ENCODE measurements at regions of chr17 and their contacts with region 1.

Region 1: GRCh38 chr17:17681187-17681848 is at the start of gene RAI1:
- DNase-seq: peak; percentile 86 to 88 (median 87)
- ATAC-seq: peak; percentile 27 to 73 (median 66)
- H3K4me3 ChIP-seq: peak within 1 kb of the TSS; percentile 68 to 96 (median 81)
- H3K27ac ChIP-seq: peak within 1 kb of the TSS; percentile 90 to 97 (median 96)
- H3K4me1 ChIP-seq: peaks cover 15 to 46% (median 32%) of the 10 kb centered on the region in 12 donors
- H3K27me3 ChIP-seq: no peaks in the 10 kb centered on the region
- CTCF ChIP-seq: peak; percentile 29 to 98 (median 82)
- POLR2A ChIP-seq: no peak
- total RNA-seq, gene RAI1: 15.1 to 37.2 (median 20.8) TPM

Region 2: GRCh38 chr17:17580662-17581470 is 100.5 kb before region 1 on chr17:
- intact Hi-C with region 1: no loop called
- DNase-seq: no peak
- ATAC-seq: peak in 1 of 4 donors; percentile 36
- H3K4me3 ChIP-seq: no peak overlapping the region
- H3K27ac ChIP-seq: no peak overlapping the region
- H3K4me1 ChIP-seq: peaks cover 0 to 10% (median 0%) of the 10 kb centered on the region in 12 donors
- H3K27me3 ChIP-seq: no peaks in the 10 kb centered on the region
- CTCF ChIP-seq: no peak
- POLR2A ChIP-seq: no peak

Region 3: DNA sequence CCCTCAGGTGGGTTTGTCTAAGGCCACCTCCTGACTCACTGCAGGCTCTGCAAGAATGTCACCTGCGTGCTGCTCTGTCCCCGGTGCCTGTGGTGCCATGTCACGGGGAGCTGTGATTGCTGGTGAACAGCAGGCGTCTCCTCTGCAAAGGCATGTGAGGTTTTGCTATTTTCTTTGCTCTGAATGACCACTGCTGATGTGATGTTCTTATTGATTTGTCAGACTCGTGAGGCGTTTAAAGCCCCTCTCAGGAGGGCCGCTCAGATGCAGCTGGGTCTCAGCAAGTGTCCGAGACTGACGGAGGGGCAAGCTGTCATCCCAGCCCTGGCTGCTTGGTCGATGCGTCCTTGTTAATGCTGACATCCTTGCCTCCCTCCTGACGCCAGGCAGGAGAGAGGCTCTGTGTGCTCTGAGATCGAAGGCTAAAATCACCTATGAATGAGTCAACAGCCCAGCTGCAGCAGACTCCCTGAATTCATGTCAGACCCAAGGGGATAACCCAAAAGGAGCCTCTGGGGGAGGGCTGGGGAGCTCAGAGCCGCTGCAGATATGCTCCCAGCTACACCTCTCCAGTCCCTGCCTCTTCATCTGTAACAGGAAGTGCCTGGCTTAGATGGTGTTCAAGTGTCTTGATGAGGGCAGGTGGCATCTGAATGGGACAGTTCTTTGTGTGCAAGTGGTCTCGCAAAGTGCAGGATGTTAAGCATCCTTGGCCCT is 78.0 kb before region 1 on chr17:
- intact Hi-C with region 1: no loop called
- DNase-seq: peak in 1 of 5 donors; percentile 22
- ATAC-seq: no peak
- H3K4me3 ChIP-seq: no peak overlapping the region
- H3K27ac ChIP-seq: no peak overlapping the region
- H3K4me1 ChIP-seq: peaks cover 0 to 13% (median 0%) of the 10 kb centered on the region in 12 donors
- H3K27me3 ChIP-seq: no peaks in the 10 kb centered on the region
- CTCF ChIP-seq: no peak
- POLR2A ChIP-seq: no peak

Region 4: DNA sequence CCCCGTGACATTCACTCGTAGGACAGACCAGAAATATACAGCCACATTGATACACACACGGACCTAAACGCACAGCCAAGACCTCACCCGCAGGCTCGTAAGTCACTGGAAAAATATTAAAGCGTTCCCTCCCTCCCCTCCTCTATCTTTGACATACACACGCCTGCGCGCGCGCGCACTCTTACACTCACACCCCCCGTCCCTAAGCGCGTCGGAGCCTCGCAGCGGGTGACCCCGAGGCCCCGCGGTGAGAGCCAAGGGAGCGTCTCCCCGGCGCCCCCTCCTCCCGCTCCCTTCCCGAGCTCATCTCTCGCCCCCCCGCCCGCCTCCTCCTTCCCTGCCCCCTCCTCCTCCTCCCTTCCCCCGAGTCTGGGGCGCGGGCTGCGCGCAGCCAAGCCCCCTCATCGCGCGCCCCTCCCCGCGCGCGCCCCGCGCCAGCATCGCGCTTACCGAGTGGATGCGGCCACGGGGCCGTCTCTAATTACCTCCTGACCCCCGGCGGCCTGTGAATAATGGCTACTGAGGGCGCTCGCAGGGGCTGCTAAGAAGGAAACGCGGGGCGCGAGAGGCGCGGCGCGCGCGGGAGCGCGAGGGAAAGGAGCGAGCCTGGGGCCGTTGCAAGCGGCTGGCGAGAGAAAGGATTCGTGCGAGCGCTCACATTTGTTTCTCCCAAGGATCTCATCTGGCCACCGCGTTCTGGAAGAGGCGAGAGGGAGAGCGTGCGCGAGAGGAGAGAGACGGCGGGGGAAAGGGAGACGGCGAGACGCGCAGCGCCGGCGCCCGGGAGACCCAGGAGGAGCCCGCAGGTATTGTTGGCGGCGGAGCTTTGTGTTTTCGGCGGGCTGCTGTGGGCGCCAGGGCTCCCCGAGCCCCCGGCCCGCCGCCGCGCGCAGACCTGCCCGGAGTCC is 42.3 kb after region 1 on chr17:
- intact Hi-C with region 1: loop called in 4 of 10 experiments (anchors 2 to 5 kb)
- DNase-seq: no peak
- ATAC-seq: peak in 2 of 4 donors; percentile 7 to 37
- H3K4me3 ChIP-seq: peak overlapping the region; percentile 19 to 73 (median 55)
- H3K27ac ChIP-seq: peak overlapping the region in 7 of 12 donors; percentile 5 to 78 (median 53)
- H3K4me1 ChIP-seq: peaks cover 0 to 65% (median 34%) of the 10 kb centered on the region in 12 donors
- H3K27me3 ChIP-seq: peaks cover 0 to 16% (median 0%) of the 10 kb centered on the region in 9 donors
- CTCF ChIP-seq: no peak
- POLR2A ChIP-seq: no peak

Region 5: GRCh38 chr17:17774009-17774881 is 92.9 kb after region 1 on chr17:
- intact Hi-C with region 1: loop called in 1 of 10 experiments (anchors 10 kb)
- DNase-seq: peak in 2 of 5 donors; percentile 57 to 66
- ATAC-seq: peak in 2 of 4 donors; percentile 34 to 35
- H3K4me3 ChIP-seq: no peak overlapping the region
- H3K27ac ChIP-seq: peak overlapping the region in 11 of 12 donors; percentile 38 to 88 (median 73)
- H3K4me1 ChIP-seq: peaks cover 10 to 68% (median 48%) of the 10 kb centered on the region in 12 donors
- H3K27me3 ChIP-seq: no peaks in the 10 kb centered on the region
- CTCF ChIP-seq: peak in 9 of 12 donors; percentile 9 to 40 (median 23)
- POLR2A ChIP-seq: no peak

Region 6: GRCh38 chr17:17792551-17793377 is 111.4 kb after region 1 on chr17:
- intact Hi-C with region 1: loop called in 3 of 10 experiments (anchors 5 to 10 kb)
- DNase-seq: peak in 3 of 5 donors; percentile 48 to 66 (median 61)
- ATAC-seq: peak; percentile 39 to 61 (median 47)
- H3K4me3 ChIP-seq: peak overlapping the region in 4 of 12 donors; percentile 6 to 30 (median 18)
- H3K27ac ChIP-seq: peak overlapping the region in 11 of 12 donors; percentile 43 to 71 (median 63)
- H3K4me1 ChIP-seq: peaks cover 14 to 55% (median 48%) of the 10 kb centered on the region in 12 donors
- H3K27me3 ChIP-seq: no peaks in the 10 kb centered on the region
- CTCF ChIP-seq: no peak
- POLR2A ChIP-seq: no peak

Region 7: DNA sequence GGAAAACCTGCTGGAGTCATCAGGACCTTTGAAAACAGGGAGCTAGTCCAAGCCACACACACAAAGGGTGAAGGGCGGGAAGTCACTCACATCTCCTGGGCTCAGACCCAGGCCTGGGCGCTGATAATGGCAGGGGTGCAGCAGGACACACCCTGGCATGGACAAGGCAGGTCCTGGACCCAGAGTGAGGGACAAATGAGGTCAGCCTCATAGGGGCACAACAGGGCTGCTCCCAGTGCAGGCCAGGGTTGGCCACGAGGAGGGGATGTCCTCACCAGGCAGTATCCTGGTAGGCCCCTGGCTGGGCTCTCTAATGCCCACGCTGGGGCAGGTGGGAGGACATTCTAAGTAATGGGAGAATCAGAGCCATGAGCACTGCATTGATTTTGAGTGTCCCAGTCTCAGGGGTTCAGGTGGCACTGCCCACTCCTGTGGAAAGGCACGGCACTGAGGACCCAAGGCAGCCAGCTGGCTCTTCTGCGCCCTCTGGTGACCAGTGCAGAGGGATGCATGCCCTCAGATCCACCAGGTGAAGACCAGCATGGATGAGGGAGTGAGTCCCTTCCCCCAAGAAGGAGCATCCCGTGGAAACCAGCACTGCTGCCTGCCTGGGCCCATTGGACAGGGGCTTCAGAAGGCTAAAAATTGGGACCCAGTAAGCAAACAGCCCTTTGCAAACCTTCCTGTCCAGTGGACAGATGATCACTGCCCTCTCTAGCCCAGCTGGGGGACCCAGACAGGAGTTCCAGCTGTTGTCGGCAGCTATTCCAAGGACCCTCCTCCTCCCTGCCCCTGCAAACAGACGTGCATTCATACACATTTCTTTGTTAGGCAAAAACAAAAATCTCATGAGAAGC is 178.8 kb after region 1 on chr17:
- intact Hi-C with region 1: loop called (anchors 1 to 10 kb)
- DNase-seq: peak; percentile 79 to 91 (median 85)
- ATAC-seq: peak; percentile 93 to 98 (median 96)
- H3K4me3 ChIP-seq: no peak overlapping the region
- H3K27ac ChIP-seq: peak overlapping the region in 8 of 12 donors; percentile 21 to 60 (median 47)
- H3K4me1 ChIP-seq: peaks cover 0 to 34% (median 15%) of the 10 kb centered on the region in 12 donors
- H3K27me3 ChIP-seq: no peaks in the 10 kb centered on the region
- CTCF ChIP-seq: peak; percentile 95 to 99 (median 98)
- POLR2A ChIP-seq: no peak

Region 8: GRCh38 chr17:18033442-18034099 is 352.3 kb after region 1 on chr17:
- intact Hi-C with region 1: loop called (anchors 1 to 10 kb)
- DNase-seq: peak in 2 of 5 donors; percentile 67 to 70
- ATAC-seq: peak; percentile 74 to 89 (median 85)
- H3K4me3 ChIP-seq: no peak overlapping the region
- H3K27ac ChIP-seq: no peak overlapping the region
- H3K4me1 ChIP-seq: peaks cover 0 to 54% (median 26%) of the 10 kb centered on the region in 12 donors
- H3K27me3 ChIP-seq: no peaks in the 10 kb centered on the region
- CTCF ChIP-seq: peak; percentile 42 to 74 (median 64)
- POLR2A ChIP-seq: no peak

Measured in heart left ventricle (tissue), 16 donors.